ENCODE measurements at regions of chr13 and their contacts with region 1.

Region 1: DNA sequence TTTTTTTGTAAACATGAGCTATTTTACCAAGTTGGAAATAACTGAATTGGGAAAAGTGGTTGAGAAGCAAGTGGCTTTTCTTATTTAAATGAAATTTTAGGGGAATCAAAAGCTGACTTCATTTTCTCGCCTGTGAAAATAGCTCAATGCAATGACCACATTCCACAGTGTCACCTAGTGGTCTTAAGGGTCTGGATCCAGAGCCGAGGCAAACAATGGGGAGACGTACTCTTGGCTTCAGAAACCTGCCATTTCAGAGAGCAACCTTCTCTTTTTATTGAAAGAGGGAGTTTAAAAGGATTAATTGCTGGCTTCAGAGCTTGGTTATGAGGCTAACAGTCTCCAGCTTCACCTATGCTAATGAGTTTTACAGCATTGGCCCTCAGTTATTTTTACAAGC is 39.7 kb upstream of the RXFP2 start:
- DNase-seq: peak in 1 of 2 experiments; percentile 7
- H3K4me3 ChIP-seq: no peak overlapping the region
- H3K4me3 Mint-ChIP-seq: no peak overlapping the region
- H3K27ac Mint-ChIP-seq: no peak overlapping the region
- H3K4me1 ChIP-seq: no peaks in the 10 kb centered on the region
- H3K4me1 Mint-ChIP-seq: no peaks in the 10 kb centered on the region
- H3K27me3 ChIP-seq: no peaks in the 10 kb centered on the region
- H3K27me3 Mint-ChIP-seq: peaks cover 5% of the 10 kb centered on the region
- CTCF ChIP-seq: peak in 1 of 2 experiments; percentile 67

Region 2: DNA sequence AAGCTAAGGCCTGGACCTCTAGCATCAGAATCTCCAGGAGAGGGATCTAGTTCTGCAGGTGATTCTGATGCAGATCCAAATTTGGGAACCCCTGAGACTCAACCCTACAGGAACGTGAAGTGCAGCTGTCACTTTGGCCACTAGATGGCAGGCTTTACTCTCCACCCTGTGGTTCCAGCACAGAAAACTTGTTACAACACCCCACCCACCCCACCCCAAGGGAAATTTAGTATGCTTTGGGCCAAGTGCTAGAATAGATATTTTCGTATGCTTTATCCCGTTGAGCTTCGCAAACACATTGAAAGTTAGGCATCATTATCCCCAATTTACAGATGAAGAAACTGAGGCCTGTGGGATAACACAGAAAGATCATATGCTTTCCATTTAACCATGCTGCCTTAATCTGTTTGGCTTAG is 267.9 kb before region 1 on chr13:
- CTCF ChIA-PET with region 1: no interaction called
- POLR2A ChIA-PET with region 1: no interaction called
- intact Hi-C with region 1: loop called (anchors 2 kb)
- DNase-seq: peak; percentile 63 to 67
- H3K4me3 ChIP-seq: no peak overlapping the region
- H3K4me3 Mint-ChIP-seq: no peak overlapping the region
- H3K27ac Mint-ChIP-seq: no peak overlapping the region
- H3K4me1 ChIP-seq: peaks cover 1% of the 10 kb centered on the region; the same call in 1 of the 2 replicates
- H3K4me1 Mint-ChIP-seq: peaks cover 1% of the 10 kb centered on the region
- H3K27me3 ChIP-seq: no peaks in the 10 kb centered on the region
- H3K27me3 Mint-ChIP-seq: peaks cover 3% of the 10 kb centered on the region
- CTCF ChIP-seq: peak; percentile 92 to 93